Activated CD8-positive, alpha-beta T cell treated with anti-CD3 and anti-CD28 coated beads for 36 hours (primary cell): ENCODE measurements at regions of chr7 and their contacts with region 1.

Region 1: DNA sequence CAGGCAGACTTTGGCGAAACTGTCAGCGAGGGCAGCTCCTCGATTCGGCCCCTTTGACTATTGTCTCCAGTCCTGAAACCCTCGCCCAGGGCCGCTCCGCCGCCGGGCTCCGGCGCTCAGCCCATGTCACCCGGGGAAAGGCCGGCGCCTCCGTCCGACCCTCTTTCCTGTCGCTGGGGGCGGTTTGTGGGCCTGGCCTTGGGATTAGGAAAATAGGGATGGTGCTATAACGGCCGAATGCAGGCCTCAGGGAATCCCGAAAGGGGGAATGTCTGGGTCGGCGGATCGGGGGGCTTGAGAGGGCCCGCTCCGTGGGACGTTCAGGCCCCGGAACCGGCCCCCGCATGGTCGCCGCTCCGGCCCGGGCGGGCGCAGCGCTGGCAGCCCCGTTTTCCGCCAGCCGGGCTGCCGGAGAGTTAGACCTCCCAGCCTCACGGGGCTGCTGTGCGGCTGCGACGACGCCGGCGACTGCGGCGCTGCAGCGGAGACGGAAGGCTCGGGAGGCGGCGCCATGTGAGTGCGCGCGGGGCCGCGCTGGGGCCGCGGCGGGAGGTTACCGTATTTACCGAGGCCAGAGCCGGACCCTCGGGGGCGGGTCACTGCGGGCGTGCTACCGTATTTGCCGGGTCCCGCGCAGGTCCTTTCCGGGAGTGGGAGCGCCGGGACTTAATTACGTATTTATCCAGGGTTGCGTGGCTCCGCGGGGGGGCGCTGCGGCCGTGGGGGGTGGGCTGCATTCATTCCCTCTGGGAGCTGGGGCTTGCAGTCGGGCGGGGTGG is 25.9 kb downstream of the ZNF775 start:
- DNase-seq: peak; percentile 82
- ATAC-seq: peak; percentile 71
- H3K4me3 Mint-ChIP-seq: peak overlapping the region; percentile 79
- H3K27ac Mint-ChIP-seq: peak overlapping the region; percentile 91
- H3K4me1 Mint-ChIP-seq: peaks cover 49% of the 10 kb centered on the region
- H3K27me3 Mint-ChIP-seq: no peaks in the 10 kb centered on the region
- CTCF ChIP-seq: peak; percentile 30

Region 2: DNA sequence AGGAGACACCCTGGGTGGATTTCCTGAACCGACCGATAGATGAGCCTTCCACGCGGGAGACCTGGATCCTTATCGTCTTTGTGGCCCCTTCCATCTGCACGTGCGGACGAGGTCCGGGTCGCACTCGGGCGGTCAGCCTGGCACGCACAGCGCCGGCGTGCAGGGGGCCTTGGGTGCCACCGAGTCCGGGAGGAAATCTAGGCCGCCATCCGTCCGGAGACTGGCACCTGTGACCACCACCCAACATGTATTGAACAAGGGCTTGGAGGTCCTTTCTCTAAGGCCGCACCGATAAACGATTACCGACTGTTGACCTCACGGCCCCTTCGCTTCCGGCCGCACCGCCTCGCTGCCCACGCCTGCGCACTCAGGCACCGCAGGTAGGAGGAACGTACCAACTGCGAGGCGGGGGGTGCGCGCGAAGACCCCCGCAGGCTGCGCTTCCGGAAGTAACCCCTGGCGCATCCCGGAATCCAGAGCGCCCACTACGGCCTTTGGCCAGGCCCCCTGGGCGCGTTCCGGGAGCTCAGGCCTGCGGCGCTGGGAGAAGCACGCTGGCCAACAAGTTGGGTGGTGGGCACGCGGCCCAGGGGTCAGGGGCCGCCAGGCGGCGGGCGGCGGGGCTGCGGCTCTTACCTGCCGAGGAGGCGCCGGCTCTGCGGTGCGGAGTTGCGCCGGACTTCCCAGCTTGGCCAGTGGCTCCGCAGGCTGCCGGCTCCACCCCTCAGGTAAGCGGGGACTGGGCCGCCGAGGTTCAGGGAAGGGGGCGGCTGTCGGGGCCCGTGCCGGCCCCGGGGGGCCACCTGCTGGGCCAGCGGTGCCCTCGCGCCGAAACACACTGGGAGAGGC is 81.9 kb before region 1 on chr7 and contains the starts of genes ACTR3C and LRRC61:
- CTCF ChIA-PET with region 1: interaction called, 3 read pairs
- POLR2A ChIA-PET with region 1: interaction called, 13 read pairs
- intact Hi-C with region 1: no loop called
- DNase-seq: peak; percentile 81
- ATAC-seq: peak; percentile 53
- H3K4me3 Mint-ChIP-seq: peak within 1 kb of the TSS; percentile 95
- H3K27ac Mint-ChIP-seq: peak within 1 kb of the TSS; percentile 100
- H3K4me1 Mint-ChIP-seq: peaks cover 48% of the 10 kb centered on the region
- H3K27me3 Mint-ChIP-seq: no peaks in the 10 kb centered on the region
- CTCF ChIP-seq: peak; percentile 43
- total RNA-seq, gene ACTR3C: 2.6 to 2.9 TPM
- total RNA-seq, gene LRRC61: 21.8 to 21.9 TPM

Region 3: GRCh38 chr7:150356265-150356897 is 48.6 kb before region 1 on chr7:
- CTCF ChIA-PET with region 1: interaction called, 12 read pairs
- POLR2A ChIA-PET with region 1: interaction called, 4 read pairs
- intact Hi-C with region 1: loop called (anchors 5 kb)
- DNase-seq: peak; percentile 38
- ATAC-seq: peak; percentile 17
- H3K4me3 Mint-ChIP-seq: peak overlapping the region; percentile 2
- H3K27ac Mint-ChIP-seq: no peak overlapping the region
- H3K4me1 Mint-ChIP-seq: peaks cover 38% of the 10 kb centered on the region
- H3K27me3 Mint-ChIP-seq: no peaks in the 10 kb centered on the region
- CTCF ChIP-seq: peak; percentile 89

Region 4: DNA sequence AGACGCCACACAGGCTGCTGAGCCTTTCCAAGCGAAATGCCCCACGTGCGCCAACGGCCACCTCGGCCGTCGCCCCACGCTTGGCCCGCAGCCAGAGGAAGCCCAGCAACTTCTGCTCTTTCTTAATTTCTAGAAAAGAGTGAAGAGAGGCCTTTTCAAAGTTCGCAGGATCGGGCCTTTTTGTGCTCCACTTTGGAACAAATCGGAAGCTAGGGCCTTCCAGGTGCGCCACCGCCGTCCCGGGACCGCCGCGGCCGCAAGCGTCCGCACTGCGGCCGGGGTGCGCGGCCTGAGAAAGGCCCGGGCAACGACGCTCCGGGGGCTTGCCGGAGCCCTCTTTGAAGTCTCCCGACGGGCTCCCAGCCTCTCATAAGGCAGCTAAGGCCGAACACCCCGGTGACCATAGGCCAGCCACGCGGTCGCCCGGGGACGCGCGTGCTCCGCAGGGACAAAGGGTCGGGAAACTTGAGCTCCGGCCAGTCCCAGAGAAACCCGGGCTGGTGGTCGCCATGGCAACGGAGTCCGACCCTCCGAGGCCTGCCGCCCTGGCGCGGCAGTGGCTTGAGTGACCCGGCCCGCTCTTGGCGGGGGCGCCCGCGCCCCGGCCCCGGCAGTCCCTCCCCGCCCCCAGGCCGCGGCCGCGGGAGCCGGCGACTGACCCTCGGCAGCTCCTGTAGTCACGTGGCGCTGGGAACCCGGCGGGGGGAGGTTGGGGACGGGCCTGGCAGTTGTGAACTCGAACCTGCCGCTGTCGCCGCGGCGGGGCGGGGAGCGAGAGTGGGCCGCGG is 36.7 kb before region 1 on chr7 and contains the start of gene REPIN1:
- CTCF ChIA-PET with region 1: interaction called, 23 read pairs
- POLR2A ChIA-PET with region 1: interaction called, 52 read pairs
- intact Hi-C with region 1: no loop called
- DNase-seq: peak; percentile 85
- ATAC-seq: peak; percentile 57
- H3K4me3 Mint-ChIP-seq: peak within 1 kb of the TSS; percentile 97
- H3K27ac Mint-ChIP-seq: peak within 1 kb of the TSS; percentile 97
- H3K4me1 Mint-ChIP-seq: peaks cover 56% of the 10 kb centered on the region
- H3K27me3 Mint-ChIP-seq: no peaks in the 10 kb centered on the region
- CTCF ChIP-seq: no peak
- total RNA-seq, gene REPIN1: 56.0 to 59.2 TPM

Region 5: DNA sequence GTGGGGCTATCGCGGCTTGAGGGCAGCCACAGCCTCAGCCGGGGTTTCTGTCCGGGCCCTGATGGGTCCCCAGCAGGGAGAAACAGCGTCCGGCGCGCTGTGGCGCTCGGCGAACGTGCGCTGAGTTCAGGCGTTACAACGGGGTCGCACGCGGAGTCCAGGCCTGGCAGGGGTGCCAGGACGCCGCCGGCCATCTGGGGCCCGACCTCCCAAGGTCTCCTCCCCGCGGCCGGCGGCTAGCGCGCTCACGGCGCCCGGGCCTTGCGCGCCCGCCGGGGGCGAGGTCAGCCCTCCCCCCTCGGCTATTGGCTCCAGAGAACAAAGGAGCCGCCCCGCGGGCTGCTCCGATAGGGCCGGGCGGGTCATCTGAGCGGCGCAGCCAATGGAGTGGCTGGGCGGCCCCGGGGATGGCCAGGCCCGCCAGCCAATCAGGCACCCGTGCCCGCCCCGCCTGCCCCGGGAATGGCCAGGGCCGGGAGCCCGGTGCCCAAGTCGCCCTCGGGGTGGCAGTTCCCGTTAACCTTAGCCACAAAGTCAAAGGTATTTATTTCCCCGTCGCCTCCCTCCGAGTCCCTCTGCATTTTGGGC is 26.0 kb before region 1 on chr7 and contains the start of gene ZNF775:
- CTCF ChIA-PET with region 1: interaction called, 10 read pairs
- POLR2A ChIA-PET with region 1: interaction called, 15 read pairs
- intact Hi-C with region 1: no loop called
- DNase-seq: peak; percentile 94
- ATAC-seq: peak; percentile 97
- H3K4me3 Mint-ChIP-seq: peak within 1 kb of the TSS; percentile 88
- H3K27ac Mint-ChIP-seq: peak within 1 kb of the TSS; percentile 70
- H3K4me1 Mint-ChIP-seq: peaks cover 47% of the 10 kb centered on the region
- H3K27me3 Mint-ChIP-seq: no peaks in the 10 kb centered on the region
- CTCF ChIP-seq: no peak
- total RNA-seq, gene ZNF775: 4.7 to 4.9 TPM

Region 6: GRCh38 chr7:150420987-150421674 is 16.1 kb after region 1 on chr7:
- CTCF ChIA-PET with region 1: interaction called, 11 read pairs
- POLR2A ChIA-PET with region 1: interaction called, 3 read pairs
- intact Hi-C with region 1: no loop called
- DNase-seq: peak; percentile 94
- ATAC-seq: peak; percentile 100
- H3K4me3 Mint-ChIP-seq: no peak overlapping the region
- H3K27ac Mint-ChIP-seq: peak overlapping the region; percentile 60
- H3K4me1 Mint-ChIP-seq: peaks cover 7% of the 10 kb centered on the region
- H3K27me3 Mint-ChIP-seq: no peaks in the 10 kb centered on the region
- CTCF ChIP-seq: peak; percentile 94

Region 7: GRCh38 chr7:150439967-150440366 is 35.0 kb after region 1 on chr7:
- CTCF ChIA-PET with region 1: no interaction called
- POLR2A ChIA-PET with region 1: no interaction called
- intact Hi-C with region 1: no loop called
- DNase-seq: no peak
- ATAC-seq: peak; percentile 69
- H3K4me3 Mint-ChIP-seq: no peak overlapping the region
- H3K27ac Mint-ChIP-seq: peak overlapping the region; percentile 2
- H3K4me1 Mint-ChIP-seq: peaks cover 27% of the 10 kb centered on the region
- H3K27me3 Mint-ChIP-seq: no peaks in the 10 kb centered on the region
- CTCF ChIP-seq: no peak

Region 8: DNA sequence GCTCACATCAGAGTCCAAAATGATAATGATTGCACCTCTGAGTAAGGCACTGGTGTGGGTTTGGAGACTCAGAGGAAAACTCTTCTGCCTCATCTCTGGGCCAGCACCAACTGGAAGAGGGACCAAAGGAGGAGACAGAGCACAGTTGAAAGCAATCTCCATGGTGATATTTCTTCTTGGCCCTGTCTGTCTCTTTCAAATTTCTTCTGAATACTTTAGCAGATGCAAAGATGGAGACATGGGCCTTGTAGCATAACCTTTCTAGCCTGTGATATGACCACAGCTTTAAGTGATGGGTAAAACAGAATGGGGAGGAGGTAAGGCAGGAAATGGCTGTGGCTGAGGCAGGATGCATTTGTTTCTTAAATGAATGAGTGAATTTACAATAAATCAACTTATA is 97.5 kb after region 1 on chr7:
- CTCF ChIA-PET with region 1: no interaction called
- POLR2A ChIA-PET with region 1: no interaction called
- intact Hi-C with region 1: no loop called
- DNase-seq: peak; percentile 70
- ATAC-seq: peak; percentile 75
- H3K4me3 Mint-ChIP-seq: peak overlapping the region; percentile 4
- H3K27ac Mint-ChIP-seq: peak overlapping the region; percentile 92
- H3K4me1 Mint-ChIP-seq: peaks cover 68% of the 10 kb centered on the region
- H3K27me3 Mint-ChIP-seq: no peaks in the 10 kb centered on the region
- CTCF ChIP-seq: no peak

Region 9: GRCh38 chr7:150580638-150581394 is 175.8 kb after region 1 on chr7:
- CTCF ChIA-PET with region 1: no interaction called
- POLR2A ChIA-PET with region 1: no interaction called
- intact Hi-C with region 1: no loop called
- DNase-seq: no peak
- ATAC-seq: peak; percentile 53
- H3K4me3 Mint-ChIP-seq: no peak overlapping the region
- H3K27ac Mint-ChIP-seq: peak overlapping the region; percentile 26
- H3K4me1 Mint-ChIP-seq: peaks cover 37% of the 10 kb centered on the region
- H3K27me3 Mint-ChIP-seq: no peaks in the 10 kb centered on the region
- CTCF ChIP-seq: no peak